WTC11 (cell line): ENCODE measurements at regions of chr15 and their contacts with region 1.

Region 1: DNA sequence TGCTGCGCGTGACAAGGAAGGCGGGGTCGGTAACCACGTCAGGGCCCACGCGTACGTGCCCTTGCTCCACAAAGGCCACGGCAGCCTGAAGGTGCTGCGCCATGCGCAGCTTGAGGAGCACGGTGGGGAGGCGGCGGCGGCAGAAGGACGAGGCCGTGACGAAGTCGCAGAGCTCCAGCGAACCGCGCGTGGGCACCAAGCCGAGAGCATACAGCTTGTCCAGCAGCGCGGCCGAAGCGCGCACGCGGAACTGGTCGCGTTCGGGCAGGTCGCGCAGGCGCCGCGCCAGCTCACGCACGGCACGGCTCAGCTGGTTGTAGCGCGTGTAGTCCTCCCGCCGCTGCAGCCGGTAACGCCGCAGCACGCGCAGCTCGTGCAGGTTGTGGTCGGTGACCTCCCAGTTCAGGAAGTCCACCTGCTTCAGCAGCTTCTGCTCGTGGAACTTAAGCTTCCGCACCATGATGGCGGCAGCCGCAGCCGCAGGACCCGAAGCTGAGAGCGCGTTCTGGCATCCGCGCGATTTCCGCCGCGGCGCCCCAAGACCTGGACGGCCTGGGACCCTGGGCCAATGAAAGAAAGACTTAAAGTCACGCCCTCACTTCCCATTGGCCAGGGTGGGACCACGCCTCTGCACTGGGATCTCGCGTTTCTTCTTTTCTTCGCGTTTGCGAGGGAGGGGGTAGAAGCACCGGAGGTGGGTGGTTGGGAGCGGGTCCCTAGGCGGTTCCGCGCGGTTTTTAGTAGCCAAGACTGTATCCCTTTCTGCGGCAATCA is at the start of gene IMP3:
- DNase-seq: peak; percentile 96
- ATAC-seq: peak; percentile 97
- H3K4me3 Mint-ChIP-seq: peak within 1 kb of the TSS; percentile 92
- H3K27ac Mint-ChIP-seq: peak within 1 kb of the TSS; percentile 98
- H3K4me1 Mint-ChIP-seq: peaks cover 35% of the 10 kb centered on the region
- H3K27me3 Mint-ChIP-seq: peaks cover 1% of the 10 kb centered on the region; the same call in 1 of the 2 replicates
- CTCF ChIP-seq: no peak
- total RNA-seq, gene IMP3: 93.7 to 107 TPM (median 94.8 TPM) in 3 replicates

Region 2: GRCh38 chr15:75468913-75469598 is 170.8 kb before region 1 on chr15:
- CTCF ChIA-PET with region 1: no interaction called
- POLR2A ChIA-PET with region 1: no interaction called
- DNase-seq: no peak
- ATAC-seq: no peak
- H3K4me3 Mint-ChIP-seq: no peak overlapping the region
- H3K27ac Mint-ChIP-seq: no peak overlapping the region
- H3K4me1 Mint-ChIP-seq: no peaks in the 10 kb centered on the region
- H3K27me3 Mint-ChIP-seq: no peaks in the 10 kb centered on the region
- CTCF ChIP-seq: no peak

Region 3: GRCh38 chr15:75578948-75579920 is 60.7 kb before region 1 on chr15 and contains the start of gene PTPN9:
- CTCF ChIA-PET with region 1: no interaction called
- POLR2A ChIA-PET with region 1: interaction called, 15 read pairs
- DNase-seq: peak; percentile 94
- ATAC-seq: peak; percentile 83
- H3K4me3 Mint-ChIP-seq: peak within 1 kb of the TSS; percentile 97
- H3K27ac Mint-ChIP-seq: peak within 1 kb of the TSS; percentile 96
- H3K4me1 Mint-ChIP-seq: peaks cover 26% of the 10 kb centered on the region
- H3K27me3 Mint-ChIP-seq: no peaks in the 10 kb centered on the region
- CTCF ChIP-seq: no peak
- total RNA-seq, gene PTPN9: 36.1 to 45.5 TPM (median 36.6 TPM) in 3 replicates

Region 4: DNA sequence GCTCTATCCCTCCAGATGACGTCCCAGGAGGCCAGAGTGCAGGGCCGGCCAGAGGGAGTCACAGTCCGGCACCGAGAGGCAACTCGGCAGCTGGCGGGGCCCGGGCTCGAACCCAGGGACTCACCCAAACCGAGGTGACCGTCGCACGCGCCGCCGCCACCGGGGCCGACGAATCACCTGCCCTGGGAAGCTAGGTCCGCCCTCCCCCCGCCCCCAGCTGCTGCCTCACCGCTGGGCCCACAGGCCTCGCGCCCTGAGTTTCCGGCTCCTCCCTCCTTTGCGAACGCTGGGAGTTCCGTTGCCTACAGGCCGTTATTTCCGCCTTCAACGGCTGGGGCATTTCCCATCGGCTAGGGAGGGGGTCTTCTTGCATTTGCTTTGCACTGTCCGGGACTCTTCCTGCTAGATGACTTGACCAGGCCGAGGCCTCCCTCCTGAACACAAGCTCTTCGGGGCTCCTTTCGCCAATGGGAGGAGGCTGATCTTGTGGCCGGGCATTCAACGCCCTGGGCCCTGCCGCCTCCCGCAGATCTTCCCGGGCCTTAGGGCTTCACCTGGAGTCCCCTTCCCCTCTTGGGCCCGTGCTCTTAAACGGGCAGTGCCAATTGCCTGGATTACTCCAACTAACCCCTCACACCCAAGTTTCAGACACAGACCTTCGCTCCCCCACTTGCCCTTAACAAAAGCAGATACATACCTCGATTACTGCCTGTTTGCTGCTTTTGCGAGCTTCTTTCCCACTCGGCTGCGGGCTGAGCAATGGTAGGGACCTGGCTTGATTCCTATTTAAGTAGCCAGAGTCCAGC is 14.2 kb before region 1 on chr15 and contains the start of gene SNUPN:
- CTCF ChIA-PET with region 1: interaction called, 26 read pairs
- POLR2A ChIA-PET with region 1: interaction called, 34 read pairs
- DNase-seq: peak; percentile 96
- ATAC-seq: peak; percentile 88
- H3K4me3 Mint-ChIP-seq: peak within 1 kb of the TSS; percentile 91
- H3K27ac Mint-ChIP-seq: peak within 1 kb of the TSS; percentile 98
- H3K4me1 Mint-ChIP-seq: peaks cover 12% of the 10 kb centered on the region
- H3K27me3 Mint-ChIP-seq: no peaks in the 10 kb centered on the region
- CTCF ChIP-seq: no peak
- total RNA-seq, gene SNUPN: 25.9 to 28.4 TPM (median 27.9 TPM) in 3 replicates

Region 5: GRCh38 chr15:75672646-75673425 is 32.9 kb after region 1 on chr15:
- CTCF ChIA-PET with region 1: interaction called, 7 read pairs
- POLR2A ChIA-PET with region 1: interaction called, 14 read pairs
- DNase-seq: no peak
- ATAC-seq: peak; percentile 39
- H3K4me3 Mint-ChIP-seq: no peak overlapping the region
- H3K27ac Mint-ChIP-seq: peak overlapping the region; percentile 89; the same call in 1 of the 2 replicates
- H3K4me1 Mint-ChIP-seq: peaks cover 20% of the 10 kb centered on the region
- H3K27me3 Mint-ChIP-seq: no peaks in the 10 kb centered on the region
- CTCF ChIP-seq: no peak

Region 6: GRCh38 chr15:75684642-75685041 is 44.7 kb after region 1 on chr15:
- CTCF ChIA-PET with region 1: interaction called, 12 read pairs
- POLR2A ChIA-PET with region 1: interaction called, 14 read pairs
- DNase-seq: no peak
- ATAC-seq: no peak
- H3K4me3 Mint-ChIP-seq: no peak overlapping the region
- H3K27ac Mint-ChIP-seq: no peak overlapping the region
- H3K4me1 Mint-ChIP-seq: peaks cover 22% of the 10 kb centered on the region
- H3K27me3 Mint-ChIP-seq: 0 out of 2 replicates have a peak, but pooled peaks cover 2% of the 10 kb centered on the region
- CTCF ChIP-seq: no peak

Region 7: GRCh38 chr15:75706682-75706954 is 66.7 kb after region 1 on chr15:
- CTCF ChIA-PET with region 1: no interaction called
- POLR2A ChIA-PET with region 1: interaction called, 10 read pairs
- DNase-seq: no peak
- ATAC-seq: no peak
- H3K4me3 Mint-ChIP-seq: no peak overlapping the region
- H3K27ac Mint-ChIP-seq: no peak overlapping the region
- H3K4me1 Mint-ChIP-seq: peaks cover 5% of the 10 kb centered on the region
- H3K27me3 Mint-ChIP-seq: peaks cover 3% of the 10 kb centered on the region
- CTCF ChIP-seq: no peak